K562 (cell line): ENCODE measurements at regions of chr12 and their contacts with region 1.

Region 1: DNA sequence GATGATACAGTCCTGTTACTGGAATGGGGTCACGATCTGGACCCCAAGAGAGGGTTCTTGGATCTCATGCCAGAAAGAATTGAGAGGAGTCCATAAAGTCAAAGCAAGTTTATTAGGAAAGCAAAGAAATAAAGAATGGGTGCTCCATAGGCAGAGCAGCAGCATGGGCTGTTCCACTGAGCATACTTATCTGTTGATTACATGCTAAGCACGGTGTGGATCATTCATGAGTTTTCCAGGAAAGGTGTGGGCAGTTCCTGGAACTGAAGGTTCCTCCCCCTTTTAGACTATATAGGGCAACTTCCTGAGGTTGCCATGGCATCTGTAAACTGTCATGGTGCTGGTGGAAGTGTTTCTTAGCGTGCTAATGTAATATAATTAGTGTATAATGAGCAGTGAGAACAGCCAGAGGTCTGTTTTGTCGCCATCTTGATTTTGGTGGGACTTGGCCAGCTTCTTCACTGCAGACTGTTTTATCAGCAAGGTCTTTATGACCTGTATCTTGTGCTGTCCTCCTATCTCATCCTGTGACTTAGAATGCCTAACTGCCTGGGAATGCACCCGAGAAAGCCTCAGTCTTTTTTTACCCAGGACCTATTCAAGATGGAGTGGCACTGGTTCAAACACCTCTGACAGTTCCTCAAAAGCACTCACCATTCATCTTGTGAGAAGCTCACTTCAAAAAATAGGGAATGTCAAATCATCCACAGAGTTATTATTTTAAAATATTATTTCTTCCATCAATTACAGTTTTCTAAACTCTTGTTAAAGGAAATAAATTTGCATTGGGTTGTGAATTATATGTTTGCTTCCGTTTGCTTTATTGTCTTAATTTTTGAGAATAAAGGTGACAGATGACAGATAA is 1358.8 kb upstream of the TMEM132C start:
- DNase-seq: peak; percentile 64 to 98 (median 68)
- ATAC-seq: peak; percentile 86
- H3K4me3 ChIP-seq: no peak overlapping the region
- H3K27ac ChIP-seq: peak overlapping the region; percentile 89
- H3K4me1 ChIP-seq: peaks cover 30 to 65% of the 10 kb centered on the region in 2 experiments
- H3K27me3 ChIP-seq: no peaks in the 10 kb centered on the region
- CTCF ChIP-seq: no peak
- EP300 ChIP-seq: peak; percentile 93
- POLR2A ChIP-seq: peak; percentile 69
- RAD21 ChIP-seq: peak in 1 of 2 experiments; percentile 51; a peak in 2 of 4 replicates

Region 2: DNA sequence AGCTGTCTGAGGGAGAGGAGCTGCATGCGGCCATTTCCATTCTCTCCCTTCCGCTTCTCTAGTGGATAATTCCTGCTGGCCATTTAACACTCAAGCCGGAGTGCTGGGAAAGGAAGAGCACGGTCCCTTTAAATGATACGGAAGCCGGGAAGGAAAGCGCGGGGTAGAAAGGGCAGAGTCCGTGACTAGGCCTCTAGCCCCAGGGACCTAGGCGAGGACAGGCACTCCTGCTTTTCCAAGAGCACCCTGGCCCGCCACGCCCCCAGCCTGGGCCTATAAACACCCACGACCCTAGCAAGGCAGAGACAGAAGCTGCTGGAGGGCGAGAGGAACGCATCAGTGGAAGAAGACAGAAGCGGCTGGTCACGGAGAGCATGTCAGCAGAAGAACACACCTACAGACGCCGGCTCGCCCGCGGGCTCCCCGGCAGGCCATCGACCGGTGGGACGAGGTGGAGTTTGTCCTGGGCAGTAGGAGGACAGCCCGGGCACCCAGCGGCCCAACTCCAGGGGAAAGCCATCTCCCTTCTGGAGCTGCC is 152.2 kb after region 1 on chr12:
- CTCF ChIA-PET with region 1: no interaction called
- POLR2A ChIA-PET with region 1: no interaction called
- in situ Hi-C with region 1: no loop called
- intact Hi-C with region 1: loop called (anchors 1 kb)
- DNase-seq: peak; percentile 78 to 92 (median 79)
- ATAC-seq: peak; percentile 77
- H3K4me3 ChIP-seq: peak overlapping the region; percentile 65
- H3K27ac ChIP-seq: peak overlapping the region; percentile 79
- H3K4me1 ChIP-seq: peaks cover 7 to 12% of the 10 kb centered on the region in 2 experiments; a peak in 3 of 5 replicates
- H3K27me3 ChIP-seq: no peaks in the 10 kb centered on the region
- CTCF ChIP-seq: no peak
- EP300 ChIP-seq: no peak
- POLR2A ChIP-seq: peak; percentile 95
- RAD21 ChIP-seq: no peak

Region 3: DNA sequence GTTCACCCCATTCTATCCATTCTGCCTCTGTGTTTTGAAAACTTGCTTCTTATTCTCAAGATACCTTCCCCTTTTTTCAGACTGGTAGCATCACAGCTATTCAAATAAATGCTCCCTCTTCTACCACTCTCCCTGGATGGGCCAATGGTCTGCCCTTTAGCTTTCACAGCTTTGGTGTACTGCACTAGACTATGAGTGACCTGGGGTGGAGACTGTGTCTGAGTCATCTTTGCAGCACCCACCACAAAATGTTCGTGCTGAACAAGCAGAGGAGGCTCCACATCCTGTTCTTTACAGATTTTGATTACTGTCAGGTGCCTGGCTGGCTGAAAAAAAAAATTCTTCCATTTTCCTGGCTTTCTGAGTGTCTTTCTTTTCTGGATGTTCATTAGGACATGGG is 254.8 kb after region 1 on chr12:
- CTCF ChIA-PET with region 1: no interaction called
- POLR2A ChIA-PET with region 1: no interaction called
- in situ Hi-C with region 1: no loop called
- intact Hi-C with region 1: loop called (anchors 5 kb)
- DNase-seq: peak; percentile 22 to 79 (median 42)
- ATAC-seq: peak; percentile 55
- H3K4me3 ChIP-seq: no peak overlapping the region
- H3K27ac ChIP-seq: peak overlapping the region; percentile 44; the same call in 2 of the 3 replicates
- H3K4me1 ChIP-seq: peaks cover 16 to 39% of the 10 kb centered on the region in 2 experiments
- H3K27me3 ChIP-seq: no peaks in the 10 kb centered on the region
- CTCF ChIP-seq: no peak
- EP300 ChIP-seq: 0 out of 2 replicates have a peak, but pooled peaks have one; percentile 17
- POLR2A ChIP-seq: no peak
- RAD21 ChIP-seq: no peak

Region 4: GRCh38 chr12:127657036-127657435 is 748.9 kb after region 1 on chr12:
- CTCF ChIA-PET with region 1: no interaction called
- POLR2A ChIA-PET with region 1: no interaction called
- in situ Hi-C with region 1: no loop called
- intact Hi-C with region 1: no loop called
- DNase-seq: no peak
- ATAC-seq: no peak
- H3K4me3 ChIP-seq: no peak overlapping the region
- H3K27ac ChIP-seq: no peak overlapping the region
- H3K4me1 ChIP-seq: no peaks in the 10 kb centered on the region
- H3K27me3 ChIP-seq: no peaks in the 10 kb centered on the region
- CTCF ChIP-seq: no peak
- EP300 ChIP-seq: no peak
- POLR2A ChIP-seq: no peak
- RAD21 ChIP-seq: no peak